Colonic mucosa (tissue), 4 donors: ENCODE measurements at regions of chr19 and their contacts with region 1.

Region 1: DNA sequence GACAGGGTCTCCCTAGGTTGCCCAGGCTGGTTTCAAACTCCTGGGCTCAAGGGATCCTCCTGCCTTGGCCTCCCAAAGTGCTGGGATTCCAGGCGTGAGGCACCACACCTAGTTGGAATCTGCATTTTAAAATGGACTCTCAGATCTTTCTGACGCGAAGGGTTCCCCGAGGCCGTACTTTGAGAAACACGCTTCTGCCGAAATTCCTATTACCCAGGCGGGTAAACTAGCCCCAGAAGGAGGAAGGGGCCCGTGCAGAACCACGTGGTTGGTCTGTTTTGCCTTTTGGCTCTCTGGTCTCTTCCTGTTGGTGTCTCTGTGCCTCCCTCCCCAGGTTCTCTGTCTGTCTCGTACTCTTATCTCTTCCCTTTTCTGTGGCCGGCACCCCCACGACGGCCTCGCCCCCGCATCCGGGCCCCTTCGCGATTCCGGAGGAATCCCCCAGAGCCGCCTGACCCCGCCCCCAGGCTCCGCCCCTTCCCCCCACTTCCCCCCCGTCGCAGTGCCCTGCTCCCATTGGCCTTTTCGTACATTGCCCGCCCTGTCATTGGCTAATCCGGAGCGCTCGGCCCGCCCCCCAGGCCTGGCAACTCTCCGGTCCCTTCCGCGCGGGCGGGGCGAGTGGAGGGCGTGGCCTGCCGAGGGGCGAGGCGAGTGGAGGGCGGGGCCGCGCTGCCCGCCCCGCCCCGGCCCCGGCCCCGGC is at the start of gene TNFAIP8L1:
- DNase-seq: peak; percentile 99
- H3K4me3 ChIP-seq: peak within 1 kb of the TSS; percentile 67
- H3K27ac ChIP-seq: peak within 1 kb of the TSS; percentile 52
- H3K4me1 ChIP-seq: peaks cover 11% of the 10 kb centered on the region
- H3K27me3 ChIP-seq: no peaks in the 10 kb centered on the region
- CTCF ChIP-seq: no peak
- total RNA-seq, gene TNFAIP8L1: 14.2 to 24.1 TPM

Region 2: GRCh38 chr19:4576016-4576933 is 62.7 kb before region 1 on chr19:
- intact Hi-C with region 1: loop called (anchors 5 kb)
- DNase-seq: peak; percentile 71
- H3K4me3 ChIP-seq: no peak overlapping the region
- H3K27ac ChIP-seq: no peak overlapping the region
- H3K4me1 ChIP-seq: no peaks in the 10 kb centered on the region
- H3K27me3 ChIP-seq: peaks cover 21% of the 10 kb centered on the region
- CTCF ChIP-seq: peak; percentile 49